HepG2 (cell line): ENCODE measurements at regions of chr4 and their contacts with region 1.

Region 1: DNA sequence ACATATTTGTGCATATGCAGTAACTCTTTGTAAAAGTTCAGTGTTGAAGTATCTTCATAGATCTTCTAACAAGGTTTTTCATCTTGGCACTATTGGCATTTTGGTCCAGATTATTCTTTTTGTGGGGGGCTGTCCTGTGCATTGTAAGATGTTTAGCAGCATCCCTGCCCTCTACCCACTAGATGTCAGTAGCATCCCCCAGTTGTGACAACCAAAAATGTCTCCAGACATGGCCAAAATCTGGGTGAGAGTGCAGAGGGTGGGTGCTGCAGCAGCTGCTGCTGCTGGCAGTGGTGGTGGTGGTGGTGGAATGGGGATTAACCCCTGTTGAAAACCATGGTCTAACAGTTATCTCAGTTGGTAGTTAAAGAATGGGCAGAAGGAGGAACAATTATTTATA is 370.0 kb downstream of the GPAT3 start:
- DNase-seq: peak; percentile 3
- ATAC-seq: peak; percentile 47; the same call in 1 of the 3 replicates
- H3K4me3 ChIP-seq: no peak overlapping the region
- H3K27ac ChIP-seq: no peak overlapping the region
- H3K4me1 ChIP-seq: no peaks in the 10 kb centered on the region
- H3K27me3 ChIP-seq: no peaks in the 10 kb centered on the region
- CTCF ChIP-seq: peak; percentile 47
- EP300 ChIP-seq: no peak
- POLR2A ChIP-seq: no peak
- RAD21 ChIP-seq: no peak

Region 2: GRCh38 chr4:82706349-82707000 is 1199.5 kb before region 1 on chr4:
- CTCF ChIA-PET with region 1: no interaction called
- POLR2A ChIA-PET with region 1: no interaction called
- in situ Hi-C with region 1: no loop called
- intact Hi-C with region 1: no loop called
- DNase-seq: no peak
- ATAC-seq: no peak
- H3K4me3 ChIP-seq: no peak overlapping the region
- H3K27ac ChIP-seq: no peak overlapping the region
- H3K4me1 ChIP-seq: peaks cover 25% of the 10 kb centered on the region
- H3K27me3 ChIP-seq: peaks cover 0 to 3% of the 10 kb centered on the region in 2 experiments; a peak in 1 of 5 replicates
- CTCF ChIP-seq: no peak
- EP300 ChIP-seq: no peak
- POLR2A ChIP-seq: no peak
- RAD21 ChIP-seq: no peak

Region 3: DNA sequence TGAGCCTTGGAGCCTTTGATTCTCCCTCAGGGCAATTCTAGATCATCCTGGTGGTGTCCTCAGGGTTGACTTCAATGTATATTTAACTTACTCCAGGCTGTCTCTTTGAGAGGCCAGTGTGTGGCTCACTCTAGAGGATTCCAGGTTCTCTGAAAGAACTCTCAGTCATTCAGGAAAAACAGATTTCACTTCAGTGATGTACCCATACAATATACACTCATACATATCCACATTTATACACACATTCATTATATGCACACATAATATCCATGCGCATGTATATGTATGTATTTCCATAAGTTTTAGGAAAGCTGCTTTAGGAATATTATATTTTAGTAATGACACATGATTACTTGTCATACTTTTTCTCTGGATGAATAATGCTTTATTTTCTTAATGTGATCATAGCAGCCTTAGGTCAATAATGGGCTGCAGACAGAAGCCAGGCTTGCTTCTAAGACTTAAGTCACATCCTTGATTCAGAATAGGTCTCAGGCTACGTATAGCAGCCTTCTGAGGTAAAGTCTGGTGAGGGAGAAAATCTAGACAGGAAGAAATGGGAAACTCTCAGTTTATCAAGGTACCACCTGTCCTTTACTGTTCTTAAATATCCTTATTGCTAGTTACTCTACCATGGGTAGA is 26.9 kb after region 1 on chr4:
- CTCF ChIA-PET with region 1: no interaction called
- POLR2A ChIA-PET with region 1: no interaction called
- in situ Hi-C with region 1: no loop called
- intact Hi-C with region 1: no loop called
- DNase-seq: no peak
- ATAC-seq: no peak
- H3K4me3 ChIP-seq: no peak overlapping the region
- H3K27ac ChIP-seq: no peak overlapping the region
- H3K4me1 ChIP-seq: no peaks in the 10 kb centered on the region
- H3K27me3 ChIP-seq: no peaks in the 10 kb centered on the region; a peak in 1 of 5 replicates
- CTCF ChIP-seq: no peak
- EP300 ChIP-seq: no peak
- POLR2A ChIP-seq: no peak
- RAD21 ChIP-seq: no peak

Region 4: DNA sequence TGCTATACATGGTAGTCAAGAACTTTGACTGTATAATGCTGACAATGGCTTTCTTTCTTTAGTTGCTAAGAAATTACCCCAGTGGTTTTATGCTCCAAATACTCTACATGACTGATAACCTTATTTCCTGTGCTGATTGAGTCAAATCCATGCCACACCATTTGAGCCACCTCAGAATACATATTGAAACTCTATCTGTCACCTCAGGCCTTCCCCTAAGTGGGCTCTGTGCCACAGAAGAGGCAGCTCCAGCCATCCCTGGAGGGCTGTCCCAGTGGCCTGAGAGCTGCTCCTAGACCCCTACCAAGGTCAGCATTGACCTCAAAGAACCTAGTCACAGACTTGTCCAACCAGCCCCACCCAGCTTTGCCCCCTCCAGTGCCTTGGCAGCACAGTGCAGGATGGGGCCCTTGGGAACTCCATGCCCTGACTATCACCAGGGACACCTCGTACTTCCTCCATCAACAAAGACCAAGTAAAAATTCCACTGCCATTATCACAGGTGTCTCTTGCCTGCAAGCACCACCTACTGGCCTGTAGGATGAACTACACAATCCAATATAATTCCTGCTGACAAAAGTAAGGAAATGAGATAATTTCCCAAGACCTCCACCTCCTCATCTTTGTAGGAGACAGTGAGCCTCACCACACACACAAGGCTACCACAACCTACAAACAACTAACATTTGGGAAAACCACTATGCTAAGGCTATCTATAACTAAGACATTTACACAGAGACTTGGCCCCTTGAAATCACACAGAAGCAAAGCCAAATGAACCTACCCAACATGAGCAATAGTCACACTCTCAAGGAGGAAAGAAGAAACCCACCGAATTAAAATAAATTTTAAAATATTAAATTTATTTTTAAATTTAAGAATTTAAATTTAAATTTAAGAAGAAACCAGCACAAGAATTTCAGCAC is 353.2 kb after region 1 on chr4:
- CTCF ChIA-PET with region 1: no interaction called
- POLR2A ChIA-PET with region 1: no interaction called
- in situ Hi-C with region 1: no loop called
- intact Hi-C with region 1: loop called (anchors 5 kb)
- DNase-seq: peak; percentile 11
- ATAC-seq: peak; percentile 70
- H3K4me3 ChIP-seq: no peak overlapping the region
- H3K27ac ChIP-seq: no peak overlapping the region
- H3K4me1 ChIP-seq: no peaks in the 10 kb centered on the region
- H3K27me3 ChIP-seq: no peaks in the 10 kb centered on the region
- CTCF ChIP-seq: peak; percentile 71
- EP300 ChIP-seq: no peak
- POLR2A ChIP-seq: no peak
- RAD21 ChIP-seq: no peak

Region 5: DNA sequence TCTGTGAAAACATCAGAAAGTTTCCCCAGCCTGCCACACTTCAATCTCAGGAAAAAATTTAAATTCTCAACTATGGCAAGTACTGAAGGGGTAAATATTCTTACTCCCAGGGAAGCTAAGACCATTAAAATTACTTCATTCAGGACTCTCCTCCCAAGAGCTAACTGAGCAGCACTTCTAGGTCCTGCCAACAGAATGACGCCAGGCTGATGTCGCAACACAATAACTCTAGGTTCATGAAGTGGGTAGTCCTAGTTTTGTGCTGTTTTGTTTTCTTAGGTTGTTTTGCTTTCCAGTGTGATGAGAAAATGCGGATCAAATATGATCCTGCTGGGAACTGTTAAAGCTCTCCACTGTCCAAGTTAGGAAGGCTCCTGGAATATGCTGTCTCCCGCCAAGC is 413.2 kb after region 1 on chr4:
- CTCF ChIA-PET with region 1: no interaction called
- POLR2A ChIA-PET with region 1: no interaction called
- in situ Hi-C with region 1: no loop called
- intact Hi-C with region 1: loop called (anchors 5 kb)
- DNase-seq: no peak
- ATAC-seq: no peak
- H3K4me3 ChIP-seq: no peak overlapping the region
- H3K27ac ChIP-seq: no peak overlapping the region
- H3K4me1 ChIP-seq: no peaks in the 10 kb centered on the region
- H3K27me3 ChIP-seq: no peaks in the 10 kb centered on the region
- CTCF ChIP-seq: no peak
- EP300 ChIP-seq: no peak
- POLR2A ChIP-seq: no peak
- RAD21 ChIP-seq: no peak